ENCODE measurements at regions of chr17 and their contacts with region 1.

Region 1: GRCh38 chr17:31888124-31888523 is 13.4 kb downstream of the UTP6 start:
- DNase-seq: no peak
- ATAC-seq: peak; percentile 26
- H3K4me3 Mint-ChIP-seq: peak overlapping the region; percentile 75
- H3K27ac Mint-ChIP-seq: peak overlapping the region; percentile 99
- H3K4me1 Mint-ChIP-seq: peaks cover 54% of the 10 kb centered on the region
- H3K27me3 Mint-ChIP-seq: no peaks in the 10 kb centered on the region
- CTCF ChIP-seq: no peak

Region 2: GRCh38 chr17:31558748-31559644 is 329.1 kb before region 1 on chr17:
- CTCF ChIA-PET with region 1: no interaction called
- POLR2A ChIA-PET with region 1: interaction called, 13 read pairs
- intact Hi-C with region 1: no loop called
- DNase-seq: peak; percentile 75
- ATAC-seq: peak; percentile 94
- H3K4me3 Mint-ChIP-seq: peak overlapping the region; percentile 73
- H3K27ac Mint-ChIP-seq: peak overlapping the region; percentile 18
- H3K4me1 Mint-ChIP-seq: peaks cover 35% of the 10 kb centered on the region
- H3K27me3 Mint-ChIP-seq: no peaks in the 10 kb centered on the region
- CTCF ChIP-seq: no peak

Region 3: DNA sequence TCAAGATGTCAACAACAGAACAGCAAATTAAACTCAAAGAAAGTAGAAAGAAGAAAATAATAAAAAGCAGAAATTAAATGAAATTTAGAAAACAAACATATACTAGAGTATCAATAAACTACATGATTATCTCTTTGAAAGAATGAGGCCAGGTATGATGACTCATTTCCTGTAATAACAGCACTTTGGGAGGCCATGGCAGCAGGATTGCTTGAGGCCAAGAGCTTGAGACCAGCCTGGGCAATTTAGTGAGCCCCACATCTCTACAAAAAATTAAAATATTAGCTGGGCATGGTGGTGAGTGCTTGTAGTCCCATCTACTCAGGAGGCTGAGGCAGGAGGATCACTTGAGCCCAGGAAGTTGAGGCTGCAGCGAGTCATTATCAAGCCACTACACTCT is 264.1 kb before region 1 on chr17:
- CTCF ChIA-PET with region 1: no interaction called
- POLR2A ChIA-PET with region 1: interaction called, 10 read pairs
- intact Hi-C with region 1: no loop called
- DNase-seq: no peak
- ATAC-seq: no peak
- H3K4me3 Mint-ChIP-seq: no peak overlapping the region
- H3K27ac Mint-ChIP-seq: no peak overlapping the region
- H3K4me1 Mint-ChIP-seq: no peaks in the 10 kb centered on the region
- H3K27me3 Mint-ChIP-seq: peaks cover 10% of the 10 kb centered on the region
- CTCF ChIP-seq: no peak

Region 4: DNA sequence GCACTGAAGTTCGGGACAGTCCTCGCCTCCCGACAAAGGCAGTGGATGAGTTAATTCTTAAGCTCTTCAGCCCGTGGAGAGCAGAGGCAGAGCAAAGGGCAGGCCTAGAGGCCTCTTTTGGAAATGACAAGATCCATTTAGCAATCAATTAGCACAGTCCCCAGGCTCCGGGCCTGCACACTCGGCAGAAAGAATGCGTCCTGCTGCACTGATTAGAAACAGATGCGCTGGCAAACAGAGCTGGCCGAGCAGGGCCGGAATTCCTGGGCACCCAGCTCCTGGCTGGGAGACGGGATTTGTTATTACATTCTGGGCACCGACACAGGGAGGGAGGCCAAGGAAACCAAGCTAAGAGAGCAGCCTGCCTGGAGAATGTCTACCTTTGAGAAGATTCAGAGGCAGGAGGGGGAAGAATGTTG is 191.9 kb before region 1 on chr17:
- CTCF ChIA-PET with region 1: no interaction called
- POLR2A ChIA-PET with region 1: no interaction called
- intact Hi-C with region 1: no loop called
- DNase-seq: no peak
- ATAC-seq: no peak
- H3K4me3 Mint-ChIP-seq: no peak overlapping the region
- H3K27ac Mint-ChIP-seq: no peak overlapping the region
- H3K4me1 Mint-ChIP-seq: no peaks in the 10 kb centered on the region
- H3K27me3 Mint-ChIP-seq: peaks cover 3% of the 10 kb centered on the region
- CTCF ChIP-seq: no peak

Region 5: DNA sequence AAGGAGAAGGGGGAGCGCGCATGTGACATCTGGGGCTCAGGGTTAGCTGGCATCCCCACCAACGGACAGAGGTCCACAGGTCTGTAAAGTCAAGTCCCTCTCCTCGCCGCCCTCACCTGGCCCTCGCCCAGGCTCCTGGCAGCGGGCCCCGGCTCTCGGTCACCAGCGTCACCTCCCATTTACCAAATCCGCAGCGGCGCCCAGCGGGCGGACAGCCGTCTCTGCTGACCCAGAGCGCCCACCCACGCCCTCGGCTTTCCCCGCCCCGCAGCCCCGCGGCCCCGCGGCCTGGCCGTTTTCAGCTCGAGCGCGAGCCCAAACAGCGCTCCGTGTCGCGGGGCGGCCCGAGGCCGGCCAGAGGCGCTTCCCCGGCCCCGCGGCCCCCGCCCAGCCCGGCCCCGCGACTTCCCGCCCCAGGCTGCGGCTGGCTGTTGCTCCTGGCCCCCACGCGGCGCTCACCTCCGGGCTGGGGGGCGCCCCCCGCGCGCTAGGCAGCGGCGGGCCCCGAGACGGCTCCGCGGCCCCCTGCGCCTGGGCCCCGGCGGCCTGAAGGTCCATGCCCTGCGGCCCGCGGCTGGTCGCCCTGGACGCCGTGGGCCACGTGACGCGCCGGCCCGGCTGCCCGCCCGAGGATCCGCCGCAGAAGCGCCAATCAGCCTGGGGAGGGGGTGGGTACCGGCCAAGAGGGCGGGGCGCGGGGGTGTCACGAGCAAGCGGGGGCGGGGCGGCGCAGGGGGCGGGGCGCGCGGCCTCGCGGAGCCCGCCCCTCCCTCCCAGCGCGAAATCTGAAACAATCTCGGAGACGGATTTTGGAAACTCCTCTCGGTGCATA is 29.3 kb before region 1 on chr17 and contains the start of gene COPRS:
- CTCF ChIA-PET with region 1: no interaction called
- POLR2A ChIA-PET with region 1: interaction called, 6 read pairs
- intact Hi-C with region 1: loop called (anchors 1 kb)
- DNase-seq: peak; percentile 75
- ATAC-seq: peak; percentile 91
- H3K4me3 Mint-ChIP-seq: peak within 1 kb of the TSS; percentile 91
- H3K27ac Mint-ChIP-seq: peak within 1 kb of the TSS; percentile 74
- H3K4me1 Mint-ChIP-seq: peaks cover 21% of the 10 kb centered on the region
- H3K27me3 Mint-ChIP-seq: no peaks in the 10 kb centered on the region
- CTCF ChIP-seq: no peak
- total RNA-seq, gene COPRS: 27.0 and 28.8 TPM in 2 replicates

Region 6: DNA sequence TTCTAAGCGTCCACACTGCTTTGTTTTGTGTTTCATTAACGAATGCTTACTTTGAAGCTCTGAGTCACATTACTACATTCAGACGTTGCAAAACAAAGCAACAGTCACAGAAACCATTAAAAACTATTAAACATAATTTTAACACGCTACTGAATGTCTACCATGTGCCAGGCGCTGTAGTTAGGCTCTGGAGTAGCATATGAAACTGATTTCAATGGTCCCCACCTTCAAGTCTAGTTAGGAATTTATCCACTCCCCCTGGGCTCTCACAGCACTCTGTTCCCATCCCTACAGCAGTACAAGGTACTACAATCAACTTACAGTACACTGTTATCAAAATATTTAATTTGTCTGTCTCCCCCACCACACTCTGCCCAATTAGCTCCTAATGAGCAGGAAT is 12.8 kb after region 1 on chr17:
- CTCF ChIA-PET with region 1: interaction called, 15 read pairs
- POLR2A ChIA-PET with region 1: interaction called, 56 read pairs
- intact Hi-C with region 1: loop called (anchors 1 kb)
- DNase-seq: no peak
- ATAC-seq: no peak
- H3K4me3 Mint-ChIP-seq: no peak overlapping the region
- H3K27ac Mint-ChIP-seq: no peak overlapping the region
- H3K4me1 Mint-ChIP-seq: peaks cover 11% of the 10 kb centered on the region
- H3K27me3 Mint-ChIP-seq: no peaks in the 10 kb centered on the region
- CTCF ChIP-seq: no peak

Measured in activated B cell treated with CpG ODN at 0.5 μM for 24 hours (primary cell).